Naive thymus-derived CD8-positive, alpha-beta T cell (primary cell): ENCODE measurements at regions of chr14 and their contacts with region 1.

Region 1: DNA sequence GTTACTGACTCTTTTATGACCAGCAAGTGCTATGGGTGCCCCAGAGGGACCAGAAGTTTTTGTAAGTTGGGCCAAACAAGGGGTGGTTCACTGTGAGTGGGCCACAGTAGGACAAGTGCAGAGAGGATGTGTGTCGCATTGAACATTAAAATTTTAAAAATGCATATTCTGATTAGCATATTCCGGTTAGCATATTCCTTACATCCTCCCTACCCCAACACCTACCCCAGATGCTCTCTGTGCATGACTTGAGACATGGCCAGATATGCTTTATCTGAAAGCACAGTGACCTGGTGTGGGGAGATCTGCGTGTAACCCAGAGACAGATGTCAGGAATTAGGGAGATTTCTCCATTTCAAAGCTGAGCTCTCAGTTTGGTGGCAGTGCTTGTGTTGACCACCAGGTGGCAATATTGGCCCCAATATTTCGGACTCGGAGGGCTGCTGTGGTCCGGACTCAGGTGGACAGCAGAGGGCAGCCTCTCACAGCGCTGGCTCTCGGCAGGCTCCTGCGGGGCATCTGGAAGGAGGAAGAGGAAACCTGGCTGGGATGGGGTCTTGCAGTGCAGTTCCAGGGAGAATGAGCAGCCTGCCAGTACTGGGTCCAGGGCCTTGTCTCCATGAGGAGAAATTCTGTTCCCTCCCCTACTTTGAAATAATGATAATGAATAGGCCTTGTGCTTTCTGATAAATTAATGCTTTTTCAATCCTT is 1.6 kb upstream of the CEBPE start:
- DNase-seq: peak; percentile 64 to 89 (median 78)
- ATAC-seq: peak; percentile 53 to 63
- H3K4me3 Mint-ChIP-seq: peak overlapping the region; percentile 61 to 90 (median 81)
- H3K27ac Mint-ChIP-seq: peak overlapping the region; percentile 94 to 99 (median 98)
- H3K4me1 Mint-ChIP-seq: peaks cover 27 to 65% (median 53%) of the 10 kb centered on the region in 4 donors
- H3K27me3 Mint-ChIP-seq: no peaks in the 10 kb centered on the region

Region 2: GRCh38 chr14:23068476-23069412 is 52.0 kb before region 1 on chr14:
- POLR2A ChIA-PET with region 1: interaction called, 12 read pairs
- DNase-seq: peak; percentile 49 to 82 (median 72)
- ATAC-seq: peak; percentile 80 to 83
- H3K4me3 Mint-ChIP-seq: peak overlapping the region; percentile 4 to 83 (median 53)
- H3K27ac Mint-ChIP-seq: peak overlapping the region in 9 of 10 donors; percentile 40 to 94 (median 82)
- H3K4me1 Mint-ChIP-seq: peaks cover 21 to 48% (median 45%) of the 10 kb centered on the region in 4 donors
- H3K27me3 Mint-ChIP-seq: no peaks in the 10 kb centered on the region

Region 3: GRCh38 chr14:23076785-23077408 is 43.8 kb before region 1 on chr14:
- POLR2A ChIA-PET with region 1: interaction called, 10 read pairs
- DNase-seq: peak in 5 of 10 donors; percentile 32 to 57 (median 48)
- ATAC-seq: peak; percentile 70 to 79
- H3K4me3 Mint-ChIP-seq: no peak overlapping the region
- H3K27ac Mint-ChIP-seq: peak overlapping the region in 3 of 10 donors; percentile 43 to 56 (median 47)
- H3K4me1 Mint-ChIP-seq: peaks cover 0 to 19% (median 8%) of the 10 kb centered on the region in 4 donors
- H3K27me3 Mint-ChIP-seq: no peaks in the 10 kb centered on the region

Region 4: GRCh38 chr14:23095196-23096108 is 25.2 kb before region 1 on chr14 and contains the start of gene C14orf119:
- POLR2A ChIA-PET with region 1: interaction called, 123 read pairs
- DNase-seq: peak in 9 of 10 donors; percentile 81 to 100 (median 100)
- ATAC-seq: peak; percentile 88
- H3K4me3 Mint-ChIP-seq: no peak within 1 kb of the TSS
- H3K27ac Mint-ChIP-seq: no peak within 1 kb of the TSS
- H3K4me1 Mint-ChIP-seq: peaks cover 24 to 60% (median 34%) of the 10 kb centered on the region in 4 donors
- H3K27me3 Mint-ChIP-seq: no peaks in the 10 kb centered on the region
- polyA plus RNA-seq, gene C14orf119: 62.7 to 122 (median 78.5) TPM

Region 5: DNA sequence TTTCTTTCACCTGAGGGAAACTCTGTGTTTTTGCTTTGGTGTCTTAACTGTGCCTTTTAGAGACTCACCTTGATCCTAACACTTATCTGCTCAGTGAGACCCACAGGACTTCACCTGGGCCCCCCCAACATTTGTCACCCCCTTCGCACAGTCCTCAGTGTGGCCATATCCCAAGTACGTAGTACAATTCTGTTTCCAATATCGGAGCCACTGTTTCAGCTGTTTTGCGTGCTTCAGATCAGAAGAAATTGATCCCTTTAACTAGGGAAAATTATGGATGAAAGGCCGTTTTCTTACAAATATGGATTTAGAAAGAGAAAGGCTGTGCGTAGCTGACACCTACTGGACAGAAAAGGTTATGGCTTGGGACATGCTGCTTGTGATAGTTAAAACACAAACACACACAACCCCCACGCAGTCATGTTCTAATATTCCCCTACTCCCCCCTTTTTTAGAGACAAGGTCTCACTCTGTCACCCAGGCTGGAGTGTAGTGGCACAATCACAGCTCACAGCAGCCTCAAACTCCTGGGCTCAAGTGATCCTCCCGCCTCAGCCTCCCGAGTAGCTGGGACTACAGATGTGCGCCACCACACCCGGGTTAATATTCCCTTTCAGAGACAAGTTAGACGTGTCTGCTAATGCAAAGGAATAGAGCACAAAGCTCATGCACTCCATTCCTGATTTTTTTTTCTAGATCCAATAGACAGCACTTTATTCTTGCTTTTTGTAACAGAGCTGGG is 66.4 kb after region 1 on chr14:
- POLR2A ChIA-PET with region 1: interaction called, 41 read pairs
- DNase-seq: peak in 7 of 10 donors; percentile 16 to 65 (median 43)
- ATAC-seq: peak; percentile 35 to 59
- H3K4me3 Mint-ChIP-seq: peak overlapping the region in 1 of 10 donors; percentile 39
- H3K27ac Mint-ChIP-seq: peak overlapping the region in 1 of 10 donors; percentile 72
- H3K4me1 Mint-ChIP-seq: peaks cover 0 to 12% (median 3%) of the 10 kb centered on the region in 4 donors
- H3K27me3 Mint-ChIP-seq: peaks cover 0 to 4% (median 1%) of the 10 kb centered on the region in 5 donors

Region 6: DNA sequence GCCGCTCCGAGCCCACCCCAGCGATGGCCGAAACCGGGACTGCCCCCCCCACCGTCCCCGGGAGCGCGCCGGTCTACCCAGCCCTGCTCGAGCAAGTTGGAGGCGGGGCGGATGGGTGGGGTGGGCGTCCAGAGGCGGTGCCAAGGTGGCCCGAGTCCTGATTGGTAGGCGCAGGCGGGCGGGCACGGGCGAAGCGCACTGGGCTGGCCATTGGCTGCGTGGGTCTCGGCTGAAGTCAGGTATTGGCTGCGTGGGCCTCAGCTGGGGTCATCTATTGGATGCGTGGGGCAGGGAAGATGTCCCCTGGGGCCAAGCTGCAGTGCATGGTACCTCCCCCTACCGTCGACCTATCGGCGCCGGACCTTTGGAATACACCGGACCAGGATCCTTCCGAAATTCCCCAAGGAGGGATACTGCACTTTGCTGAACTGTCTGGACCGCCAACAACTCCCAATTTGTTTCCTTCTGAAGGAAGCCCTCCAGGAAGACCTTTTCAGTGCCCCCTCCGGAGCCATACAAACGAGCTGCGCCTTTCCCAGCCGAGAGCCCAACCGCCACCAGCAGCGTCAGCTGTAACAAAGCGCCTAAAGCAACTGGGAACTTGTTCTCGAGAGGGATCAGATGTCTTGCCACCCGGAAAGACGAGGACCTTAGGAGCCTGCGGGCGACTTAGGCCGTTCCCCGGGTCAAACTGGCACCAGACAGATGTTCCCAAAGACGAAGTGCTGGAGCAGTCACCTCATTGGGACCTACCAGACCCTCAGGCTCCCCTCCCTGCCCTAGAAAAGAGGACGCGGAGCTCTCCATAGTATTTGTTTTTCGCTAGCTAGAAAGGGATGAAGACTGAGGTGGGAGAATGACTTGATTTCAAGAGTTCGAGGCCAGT is 165.6 kb after region 1 on chr14 and contains the start of gene HOMEZ:
- POLR2A ChIA-PET with region 1: interaction called, 14 read pairs
- DNase-seq: peak; percentile 91 to 98 (median 96)
- ATAC-seq: peak; percentile 97 to 98
- H3K4me3 Mint-ChIP-seq: peak within 1 kb of the TSS; percentile 90 to 100 (median 98)
- H3K27ac Mint-ChIP-seq: peak within 1 kb of the TSS; percentile 82 to 97 (median 96)
- H3K4me1 Mint-ChIP-seq: peaks cover 6 to 33% (median 32%) of the 10 kb centered on the region in 4 donors
- H3K27me3 Mint-ChIP-seq: no peaks in the 10 kb centered on the region
- polyA plus RNA-seq, gene HOMEZ: 3.9 to 6.1 (median 5.9) TPM

Region 7: DNA sequence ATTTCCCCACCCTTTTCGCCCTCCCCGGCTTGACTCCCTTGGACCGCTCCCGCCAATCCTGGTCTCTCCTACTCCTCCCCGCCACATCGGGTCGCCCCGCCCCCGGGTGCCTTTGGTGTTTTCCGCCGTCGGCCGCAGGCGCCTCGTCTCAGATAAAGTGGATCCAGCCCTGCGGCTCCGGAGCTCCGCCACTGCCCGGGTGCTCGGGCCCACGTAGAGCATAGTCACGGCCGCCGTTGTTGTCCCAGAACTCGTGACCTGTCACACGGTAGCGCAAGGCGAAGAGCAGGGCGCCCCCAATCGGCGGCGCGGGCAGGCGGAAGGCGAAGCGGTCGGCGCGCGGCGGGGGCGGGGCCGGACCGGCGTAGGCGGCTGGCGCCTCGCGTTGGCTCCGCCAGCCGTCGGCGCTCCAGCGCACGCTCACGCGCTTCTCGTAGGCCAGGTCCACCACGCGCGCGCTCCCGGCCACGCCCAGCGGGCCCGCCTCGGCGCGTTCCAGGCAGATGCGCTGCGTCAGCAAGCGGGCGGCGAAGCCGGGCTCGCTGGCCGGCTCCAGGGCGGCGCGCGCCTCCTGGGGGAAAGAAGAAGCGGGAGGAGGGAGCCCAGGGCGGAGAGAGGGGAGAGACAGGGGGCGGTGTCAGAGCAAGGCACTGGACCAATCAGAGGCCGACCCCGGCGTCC is 180.7 kb after region 1 on chr14:
- POLR2A ChIA-PET with region 1: interaction called, 11 read pairs
- DNase-seq: peak; percentile 95 to 99 (median 97)
- ATAC-seq: peak; percentile 68 to 74
- H3K4me3 Mint-ChIP-seq: peak overlapping the region; percentile 86 to 100 (median 94)
- H3K27ac Mint-ChIP-seq: peak overlapping the region; percentile 84 to 99 (median 95)
- H3K4me1 Mint-ChIP-seq: peaks cover 11 to 39% (median 32%) of the 10 kb centered on the region in 4 donors
- H3K27me3 Mint-ChIP-seq: peaks cover 0 to 13% (median 11%) of the 10 kb centered on the region in 5 donors